IMR-90 (cell line): ENCODE measurements at regions of chr15 and their contacts with region 1.

Region 1: GRCh38 chr15:28004143-28005003 is 94.7 kb downstream of the OCA2 start:
- DNase-seq: no peak
- ATAC-seq: no peak
- H3K4me3 ChIP-seq: no peak overlapping the region
- H3K27ac ChIP-seq: no peak overlapping the region
- H3K4me1 ChIP-seq: no peaks in the 10 kb centered on the region
- H3K27me3 ChIP-seq: no peaks in the 10 kb centered on the region
- CTCF ChIP-seq: no peak
- POLR2A ChIP-seq: no peak
- RAD21 ChIP-seq: no peak

Region 2: DNA sequence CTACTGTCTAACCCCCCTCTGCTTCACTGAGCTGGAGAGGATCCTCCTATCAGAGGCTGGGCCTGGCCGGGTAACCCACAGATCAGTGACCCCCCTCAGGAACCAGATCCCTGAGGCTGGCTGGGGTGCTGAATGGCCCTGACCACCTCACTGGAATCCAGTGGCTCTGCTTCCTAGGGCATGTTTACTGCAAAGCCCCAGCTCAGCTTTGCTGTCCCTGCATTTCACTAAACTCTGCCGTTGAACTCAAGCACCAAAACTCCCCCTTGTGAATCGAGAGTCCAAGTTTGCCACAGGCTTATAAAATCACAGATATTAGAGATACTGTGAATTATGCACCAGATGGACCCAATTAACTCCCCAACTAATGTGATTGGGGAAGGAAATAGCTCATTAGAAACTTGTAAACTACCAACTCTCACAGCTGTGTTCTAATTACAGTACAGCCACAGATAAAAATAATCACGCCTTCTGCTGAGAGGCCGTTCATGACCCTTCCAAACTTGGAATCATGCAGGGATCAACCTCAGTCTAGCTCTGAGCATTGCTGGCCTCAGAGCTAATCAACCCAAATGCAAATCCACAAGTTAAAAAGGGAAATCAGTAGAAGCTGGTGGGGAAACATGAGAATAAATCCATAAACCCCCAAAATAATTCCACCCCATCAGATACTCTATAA is 47.7 kb after region 1 on chr15:
- CTCF ChIA-PET with region 1: no interaction called
- POLR2A ChIA-PET with region 1: no interaction called
- dilution Hi-C with region 1: no loop called
- in situ Hi-C with region 1: loop called (anchors 5 kb)
- intact Hi-C with region 1: no loop called
- DNase-seq: no peak
- ATAC-seq: no peak
- H3K4me3 ChIP-seq: no peak overlapping the region
- H3K27ac ChIP-seq: no peak overlapping the region
- H3K4me1 ChIP-seq: no peaks in the 10 kb centered on the region
- H3K27me3 ChIP-seq: no peaks in the 10 kb centered on the region
- CTCF ChIP-seq: no peak
- POLR2A ChIP-seq: no peak
- RAD21 ChIP-seq: no peak